HAP-1 (cell line): ENCODE measurements at regions of chr13 and their contacts with region 1.

Region 1: GRCh38 chr13:49300739-49301589 is 53.2 kb downstream of the CDADC1 start:
- DNase-seq: peak; percentile 71 to 82
- H3K4me3 ChIP-seq: peak overlapping the region; percentile 6; the same call in 1 of the 2 replicates
- H3K4me1 ChIP-seq: no peaks in the 10 kb centered on the region
- H3K27me3 ChIP-seq: no peaks in the 10 kb centered on the region

Region 2: GRCh38 chr13:49606747-49607648 is 306.0 kb after region 1 on chr13:
- in situ Hi-C with region 1: loop called (anchors 5 kb)
- DNase-seq: peak; percentile 88 to 93
- H3K4me3 ChIP-seq: no peak overlapping the region
- H3K4me1 ChIP-seq: 0 out of 2 replicates have a peak, but pooled peaks cover 2% of the 10 kb centered on the region
- H3K27me3 ChIP-seq: no peaks in the 10 kb centered on the region

Region 3: GRCh38 chr13:49828458-49828857 is 527.5 kb after region 1 on chr13:
- in situ Hi-C with region 1: loop called (anchors 25 kb)
- DNase-seq: no peak
- H3K4me3 ChIP-seq: no peak overlapping the region
- H3K4me1 ChIP-seq: no peaks in the 10 kb centered on the region
- H3K27me3 ChIP-seq: no peaks in the 10 kb centered on the region